ENCODE measurements at regions of chr11 and their contacts with region 1.

Region 1: GRCh38 chr11:62705880-62706849 is 1.1 kb downstream of the BSCL2 start:
- DNase-seq: peak; percentile 82 to 95
- H3K4me3 ChIP-seq: peak overlapping the region; percentile 64 to 83 (median 82)
- H3K27ac ChIP-seq: peak overlapping the region; percentile 65
- H3K4me1 ChIP-seq: peaks cover 7 to 34% (median 20%) of the 10 kb centered on the region in 4 experiments
- H3K27me3 ChIP-seq: no peaks in the 10 kb centered on the region
- CTCF ChIP-seq: no peak
- EP300 ChIP-seq: no peak
- POLR2A ChIP-seq: peak in 1 of 2 experiments; percentile 62; a peak in 2 of 3 replicates
- RAD21 ChIP-seq: no peak

Region 2: GRCh38 chr11:62678770-62679696 is 27.1 kb before region 1 on chr11 and contains the start of gene UBXN1:
- CTCF ChIA-PET with region 1: interaction called, 21 read pairs
- POLR2A ChIA-PET with region 1: interaction called, 2,041 read pairs
- DNase-seq: peak in 1 of 2 experiments; percentile 88
- H3K4me3 ChIP-seq: peak within 1 kb of the TSS; percentile 78 to 98 (median 88)
- H3K27ac ChIP-seq: peak within 1 kb of the TSS; percentile 68
- H3K4me1 ChIP-seq: peaks cover 2 to 8% (median 4%) of the 10 kb centered on the region in 4 experiments; a peak in 4 of 7 replicates
- H3K27me3 ChIP-seq: no peaks in the 10 kb centered on the region
- CTCF ChIP-seq: no peak; a peak in 1 of 4 replicates
- EP300 ChIP-seq: no peak
- POLR2A ChIP-seq: peak; percentile 26 to 79
- RAD21 ChIP-seq: no peak
- total RNA-seq, gene UBXN1: 104 and 114 TPM in 2 replicates

Region 3: GRCh38 chr11:62694455-62695167 is 11.6 kb before region 1 on chr11:
- CTCF ChIA-PET with region 1: interaction called, 35 read pairs
- POLR2A ChIA-PET with region 1: interaction called, 34 read pairs
- DNase-seq: peak in 1 of 2 experiments; percentile 87
- H3K4me3 ChIP-seq: no peak overlapping the region
- H3K27ac ChIP-seq: no peak overlapping the region
- H3K4me1 ChIP-seq: no peaks in the 10 kb centered on the region; a peak in 1 of 7 replicates
- H3K27me3 ChIP-seq: no peaks in the 10 kb centered on the region
- CTCF ChIP-seq: peak; percentile 76 to 89 (median 81)
- EP300 ChIP-seq: no peak
- POLR2A ChIP-seq: no peak
- RAD21 ChIP-seq: peak; percentile 72 to 84

Region 4: DNA sequence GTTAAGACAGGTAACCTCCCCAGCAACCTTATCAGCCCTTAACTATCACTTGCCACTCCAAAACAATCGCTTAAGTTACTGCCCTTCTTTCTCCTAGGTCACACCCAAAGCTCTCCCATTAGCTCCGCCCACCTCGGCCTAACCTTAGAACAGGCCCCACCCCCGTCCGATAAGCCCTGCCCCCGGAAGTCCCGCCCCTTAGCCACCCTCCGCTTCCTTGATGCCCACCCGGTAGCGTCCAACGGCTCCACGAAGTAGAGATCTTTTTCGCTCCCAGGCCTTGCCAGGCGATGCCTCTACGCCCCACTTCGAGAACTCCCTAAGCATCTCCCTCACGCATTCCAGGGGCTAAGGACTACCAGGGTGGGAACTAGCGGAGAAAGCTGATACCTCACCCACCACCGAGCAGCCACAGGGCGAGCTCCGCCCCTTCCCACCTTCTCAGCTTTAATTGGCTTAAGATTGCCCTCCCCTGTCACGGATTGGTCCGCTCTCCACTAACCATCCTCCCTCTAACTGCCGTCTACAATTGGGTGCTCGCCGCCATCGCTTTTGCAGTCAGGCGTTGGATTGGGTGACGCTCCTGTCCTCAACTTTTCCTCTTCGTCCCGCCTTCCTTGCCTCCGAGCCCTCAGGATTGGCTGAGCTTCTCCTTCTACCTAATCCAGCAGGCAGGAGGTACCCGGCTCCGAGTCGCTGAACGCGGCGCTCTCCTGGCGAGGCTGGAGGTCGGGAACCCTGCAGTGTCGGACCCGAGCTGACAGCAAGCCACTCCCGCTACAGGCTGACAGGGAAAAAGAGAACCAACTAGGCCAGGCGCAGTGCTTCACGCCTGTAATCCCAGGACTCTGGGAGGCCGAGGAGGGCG is 47.8 kb after region 1 on chr11 and contains the start of gene ZBTB3:
- CTCF ChIA-PET with region 1: interaction called, 3 read pairs
- POLR2A ChIA-PET with region 1: interaction called, 29 read pairs
- DNase-seq: peak; percentile 97 to 99
- H3K4me3 ChIP-seq: peak within 1 kb of the TSS; percentile 74 to 89 (median 82)
- H3K27ac ChIP-seq: peak within 1 kb of the TSS; percentile 86
- H3K4me1 ChIP-seq: peaks cover 4 to 9% (median 6%) of the 10 kb centered on the region in 4 experiments
- H3K27me3 ChIP-seq: no peaks in the 10 kb centered on the region
- CTCF ChIP-seq: no peak
- EP300 ChIP-seq: no peak
- POLR2A ChIP-seq: peak; percentile 37 to 79
- RAD21 ChIP-seq: 0 out of 4 replicates have a peak, but pooled peaks of 1 of the 2 experiments have one; percentile 6
- total RNA-seq, gene ZBTB3: 76.5 and 76.9 TPM in 2 replicates

Region 5: GRCh38 chr11:62880803-62881578 is 174.8 kb after region 1 on chr11 and contains the start of gene SLC3A2:
- CTCF ChIA-PET with region 1: no interaction called
- POLR2A ChIA-PET with region 1: interaction called, 14 read pairs
- DNase-seq: peak; percentile 56 to 88
- H3K4me3 ChIP-seq: peak within 1 kb of the TSS; percentile 67 to 97 (median 88)
- H3K27ac ChIP-seq: peak within 1 kb of the TSS; percentile 98
- H3K4me1 ChIP-seq: peaks cover 0 to 30% (median 12%) of the 10 kb centered on the region in 4 experiments; a peak in 5 of 7 replicates
- H3K27me3 ChIP-seq: no peaks in the 10 kb centered on the region
- CTCF ChIP-seq: peak; percentile 60 to 82 (median 71)
- EP300 ChIP-seq: no peak
- POLR2A ChIP-seq: peak; percentile 97 to 99
- RAD21 ChIP-seq: peak; percentile 39 to 55
- total RNA-seq, gene SLC3A2: 393 and 410 TPM in 2 replicates

Measured in H1 (cell line).